Right ventricle myocardium inferior (tissue), 1 donor: ENCODE measurements at regions of chr11 and their contacts with region 1.

Region 1: GRCh38 chr11:67167086-67167485 is 48.0 kb downstream of the KDM2A start:
- DNase-seq: no peak
- ATAC-seq: no peak

Region 2: GRCh38 chr11:66800720-66801428 is 366.2 kb before region 1 on chr11:
- intact Hi-C with region 1: no loop called
- DNase-seq: no peak
- ATAC-seq: no peak

Region 3: DNA sequence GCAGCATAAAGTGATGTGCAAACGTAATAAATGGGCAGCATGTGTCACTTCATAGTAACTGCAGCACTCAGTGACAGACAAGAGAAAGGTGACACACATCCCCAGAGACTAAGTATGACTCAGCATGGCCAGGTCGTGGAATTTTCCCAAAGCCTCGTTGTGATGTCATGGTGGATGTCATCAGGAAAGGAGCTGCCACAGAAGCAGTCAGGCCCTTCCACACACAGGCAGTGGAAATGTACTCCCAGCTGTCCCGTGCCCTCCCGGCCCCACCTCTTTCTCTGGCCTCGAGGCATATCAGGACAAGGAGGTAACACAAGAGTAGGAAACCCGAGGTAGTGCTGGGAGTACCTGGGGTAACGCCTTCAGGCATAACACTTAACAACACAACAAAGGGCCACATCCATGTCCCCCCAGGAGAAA is 217.0 kb before region 1 on chr11:
- intact Hi-C with region 1: no loop called
- DNase-seq: no peak
- ATAC-seq: no peak

Region 4: DNA sequence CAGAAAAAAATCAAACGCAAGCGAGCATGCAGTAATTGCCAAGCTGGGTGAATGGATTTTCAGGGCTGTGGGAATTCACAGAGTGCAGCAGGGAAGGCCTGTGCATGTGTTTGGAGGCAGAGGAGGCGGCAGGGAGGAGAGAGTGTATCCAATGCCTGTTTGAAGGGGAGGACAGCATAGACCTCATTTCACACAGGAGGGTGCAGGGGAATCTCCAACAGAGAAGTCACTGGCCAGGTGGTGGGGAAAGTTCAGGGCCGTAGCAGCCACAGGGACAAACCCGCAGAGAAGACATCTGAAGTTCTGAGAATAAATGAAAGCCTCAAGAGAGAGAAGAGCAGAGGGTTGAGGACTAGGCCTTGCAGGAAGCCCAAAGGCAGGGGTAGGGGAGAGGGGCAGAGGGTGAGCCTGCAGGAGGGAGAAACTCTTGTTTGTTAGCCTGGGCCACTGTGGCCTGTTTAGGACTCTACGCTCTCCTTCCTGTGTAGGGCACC is 67.2 kb before region 1 on chr11:
- intact Hi-C with region 1: loop called (anchors 5 kb)
- DNase-seq: no peak
- ATAC-seq: no peak